HEK293T (cell line): ENCODE measurements at regions of chrX and their contacts with region 1.

Region 1: DNA sequence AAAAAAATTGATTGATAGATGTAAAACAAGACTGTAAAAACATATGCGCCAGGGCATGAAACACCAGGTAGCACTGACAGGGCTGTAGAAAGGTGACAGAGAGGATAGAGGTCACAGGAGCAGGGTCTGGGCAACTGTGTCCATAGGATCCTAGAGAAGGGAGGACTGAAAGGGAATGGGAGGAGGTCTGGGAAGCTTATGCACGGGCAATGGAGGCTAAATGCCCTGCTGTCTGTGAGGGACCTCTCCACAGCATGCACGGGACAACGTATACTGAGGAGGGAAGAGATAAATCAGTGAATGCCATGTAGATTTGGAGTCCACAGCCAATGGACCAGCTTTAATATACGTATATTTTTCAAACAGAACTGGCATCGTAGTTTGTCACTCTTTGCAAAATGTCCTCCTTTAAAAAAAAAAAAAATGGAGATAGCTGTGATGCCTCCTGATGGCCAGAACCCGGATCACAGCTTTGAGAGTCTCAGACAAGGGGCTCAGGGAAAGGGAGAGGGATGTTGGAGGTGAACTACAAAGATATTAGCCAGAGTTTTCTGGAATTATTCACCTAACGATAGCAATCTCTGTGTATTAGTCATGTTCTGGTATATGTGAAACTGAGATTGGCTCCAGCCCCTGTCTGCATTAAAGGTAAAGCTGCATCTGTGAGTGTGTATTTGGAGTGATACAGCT is 16.0 kb downstream of the RAB40A start:
- DNase-seq: peak; percentile 20

Region 2: GRCh38 chrX:103488794-103489193 is 14.5 kb before region 1 on chrX:
- CTCF ChIA-PET with region 1: interaction called, 22 read pairs
- POLR2A ChIA-PET with region 1: no interaction called
- DNase-seq: no peak

Region 3: DNA sequence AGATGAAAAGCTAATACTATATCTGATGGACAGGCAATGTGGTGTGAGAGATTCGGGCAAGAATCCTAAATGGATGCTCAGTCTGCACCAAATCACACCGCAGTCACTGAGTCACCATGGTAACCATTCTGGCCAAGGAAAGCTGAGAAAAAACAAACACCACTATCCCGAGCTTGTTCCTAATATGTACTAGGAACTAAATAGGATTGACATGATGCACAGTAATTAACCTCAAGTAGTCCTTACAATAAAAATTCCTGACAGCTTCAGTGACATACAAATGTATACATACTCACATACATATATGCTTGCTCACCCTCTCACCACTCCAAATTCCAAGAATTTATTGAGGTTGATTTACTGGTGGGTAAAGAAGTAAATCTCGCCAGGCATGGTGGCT is 17.1 kb after region 1 on chrX:
- CTCF ChIA-PET with region 1: no interaction called
- POLR2A ChIA-PET with region 1: no interaction called
- DNase-seq: no peak